ENCODE measurements at regions of chr6 and their contacts with region 1.

Region 1: GRCh38 chr6:159679091-159680077 is 13.7 kb downstream of the SOD2 start:
- DNase-seq: no peak
- H3K4me3 Mint-ChIP-seq: no peak overlapping the region
- H3K27ac Mint-ChIP-seq: peak overlapping the region; percentile 12
- H3K4me1 Mint-ChIP-seq: peaks cover 14% of the 10 kb centered on the region
- H3K27me3 Mint-ChIP-seq: no peaks in the 10 kb centered on the region

Region 2: GRCh38 chr6:159693128-159693893 is 13.9 kb after region 1 on chr6 and contains the start of gene SOD2:
- CTCF ChIA-PET with region 1: interaction called, 27 read pairs
- POLR2A ChIA-PET with region 1: no interaction called
- DNase-seq: peak; percentile 85
- H3K4me3 Mint-ChIP-seq: peak within 1 kb of the TSS; percentile 91
- H3K27ac Mint-ChIP-seq: peak within 1 kb of the TSS; percentile 96
- H3K4me1 Mint-ChIP-seq: peaks cover 57% of the 10 kb centered on the region
- H3K27me3 Mint-ChIP-seq: no peaks in the 10 kb centered on the region
- total RNA-seq, gene SOD2: 62.9 to 64.0 TPM